Heart right ventricle (tissue), 16 donors: ENCODE measurements at regions of chr2 and their contacts with region 1.

Region 1: DNA sequence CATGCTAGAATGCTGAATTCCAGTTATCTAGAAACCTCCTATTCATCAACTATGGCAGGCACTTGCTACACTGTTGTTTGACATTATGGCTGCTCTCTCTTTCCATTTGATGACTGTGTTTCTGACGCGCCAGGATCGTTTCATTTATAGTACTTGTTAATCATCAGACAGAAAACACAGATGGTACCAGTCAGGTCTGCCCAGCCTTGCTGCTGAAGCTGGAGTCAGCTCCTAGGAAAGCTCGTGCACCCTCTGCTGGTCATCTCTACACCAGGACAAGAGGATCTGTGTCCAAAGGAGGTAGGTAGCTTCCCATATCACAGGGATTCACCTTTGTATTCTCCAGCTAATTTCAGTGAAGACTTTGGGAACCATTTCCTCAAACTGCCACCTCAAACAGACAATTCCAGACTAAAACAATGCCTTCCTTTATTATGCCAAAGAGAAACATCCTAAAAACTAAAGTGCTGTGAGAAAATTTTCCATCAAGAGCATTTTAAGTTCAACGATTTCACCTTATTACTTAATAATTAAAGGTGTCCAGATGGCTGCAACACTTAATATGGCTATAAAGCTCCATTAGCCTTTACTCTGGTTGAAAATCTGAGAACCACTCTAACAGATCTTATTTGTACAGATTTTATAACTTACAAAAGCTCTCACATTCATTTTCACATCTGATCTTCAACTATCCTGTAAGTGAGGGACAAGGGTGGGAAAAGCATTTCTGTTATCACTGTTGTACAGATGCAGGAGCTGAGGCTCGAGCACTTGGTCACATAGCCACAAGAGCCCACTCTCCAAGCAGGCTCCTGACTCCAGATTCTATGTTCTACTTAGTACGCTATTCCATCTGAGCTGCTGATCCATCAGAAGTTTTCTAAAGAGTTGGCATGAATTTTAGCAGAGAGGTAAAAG is 17.5 kb downstream of the METTL8 start:
- DNase-seq: peak; percentile 65 to 86
- ATAC-seq: peak; percentile 92 to 99 (median 96)
- H3K4me3 ChIP-seq: no peak overlapping the region
- H3K27ac ChIP-seq: peak overlapping the region in 2 of 10 donors; percentile 19 to 32
- H3K4me1 ChIP-seq: peaks cover 0 to 18% (median 0%) of the 10 kb centered on the region in 9 donors
- H3K27me3 ChIP-seq: no peaks in the 10 kb centered on the region
- CTCF ChIP-seq: peak; percentile 64 to 92 (median 87)

Region 2: GRCh38 chr2:170928824-170929685 is 487.2 kb before region 1 on chr2 and contains the start of gene GORASP2:
- intact Hi-C with region 1: loop called in 1 of 10 experiments (anchors 5 kb)
- DNase-seq: peak; percentile 97 to 99
- ATAC-seq: peak; percentile 97 to 99 (median 98)
- H3K4me3 ChIP-seq: peak within 1 kb of the TSS; percentile 73 to 98 (median 88)
- H3K27ac ChIP-seq: peak within 1 kb of the TSS; percentile 82 to 98 (median 94)
- H3K4me1 ChIP-seq: peaks cover 3 to 47% (median 38%) of the 10 kb centered on the region in 9 donors
- H3K27me3 ChIP-seq: no peaks in the 10 kb centered on the region
- CTCF ChIP-seq: peak; percentile 93 to 98 (median 97)
- total RNA-seq, gene GORASP2: 54.2 to 74.1 (median 62.1) TPM

Region 3: DNA sequence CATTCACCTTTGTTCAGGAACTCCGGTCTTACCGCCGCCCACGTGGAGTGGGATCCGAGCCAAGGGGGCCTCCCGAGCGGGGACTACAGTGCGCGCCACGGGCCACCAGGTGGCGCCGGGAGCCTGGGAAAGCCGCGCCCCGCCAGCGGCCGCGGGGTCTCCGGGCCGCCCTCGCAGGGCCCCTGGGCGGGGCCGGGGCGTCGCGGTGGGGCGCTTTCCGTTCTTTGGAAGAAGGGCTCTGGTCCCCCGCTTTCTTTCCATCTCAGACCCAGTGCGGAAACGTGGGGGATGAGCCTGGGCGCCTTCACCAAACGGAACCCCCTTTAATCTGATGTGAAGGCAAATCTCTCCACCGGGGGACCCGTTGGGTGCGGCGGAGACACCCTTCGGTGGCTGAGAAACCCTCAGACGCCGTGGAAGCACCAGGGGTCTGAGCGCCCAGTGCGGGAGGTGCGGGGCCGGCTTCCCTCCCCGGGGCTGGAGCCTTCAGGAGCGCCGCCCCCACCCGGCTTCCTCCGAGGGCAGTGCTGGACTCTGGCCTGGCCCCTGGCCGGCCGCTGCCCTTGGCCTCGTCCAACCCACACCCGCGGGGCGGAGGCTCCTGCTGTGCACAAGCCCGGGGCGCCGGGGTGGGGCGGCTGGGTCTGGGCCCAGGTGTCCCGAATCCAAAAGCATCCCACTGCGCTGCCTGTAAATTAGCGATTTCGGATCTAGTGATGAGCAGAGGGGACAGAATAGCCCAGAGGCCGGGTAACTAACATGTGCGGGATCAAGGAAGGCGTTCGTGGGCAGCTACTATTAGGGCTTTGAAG is 442.6 kb before region 1 on chr2:
- intact Hi-C with region 1: loop called (anchors 1 to 5 kb)
- DNase-seq: peak; percentile 84 to 85
- ATAC-seq: peak; percentile 95 to 98 (median 97)
- H3K4me3 ChIP-seq: peak overlapping the region; percentile 65 to 93 (median 72)
- H3K27ac ChIP-seq: peak overlapping the region; percentile 47 to 92 (median 82)
- H3K4me1 ChIP-seq: peaks cover 0 to 14% (median 10%) of the 10 kb centered on the region in 9 donors
- H3K27me3 ChIP-seq: no peaks in the 10 kb centered on the region
- CTCF ChIP-seq: peak; percentile 82 to 99 (median 94)

Region 4: DNA sequence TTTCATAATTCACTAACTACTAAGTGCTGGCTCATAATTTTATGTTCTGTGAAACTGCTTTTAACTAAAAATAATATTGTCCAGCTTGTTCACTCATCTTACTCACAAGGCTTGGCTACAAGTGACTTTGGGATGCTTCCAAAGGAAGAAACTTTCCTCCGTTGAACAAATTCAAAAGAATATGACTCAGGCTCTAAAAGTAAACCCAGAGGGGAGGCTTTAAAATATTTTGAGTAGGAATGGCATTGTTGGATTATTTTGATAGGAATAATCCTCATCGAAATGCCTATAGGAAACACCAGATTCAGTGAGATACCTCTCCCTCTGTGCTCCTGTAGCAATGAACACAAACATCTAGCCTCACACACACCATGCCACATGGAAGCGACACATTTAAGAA is 230.3 kb before region 1 on chr2:
- intact Hi-C with region 1: loop called in 1 of 10 experiments (anchors 10 kb)
- DNase-seq: peak in 1 of 2 donors; percentile 4
- ATAC-seq: no peak
- H3K4me3 ChIP-seq: no peak overlapping the region
- H3K27ac ChIP-seq: no peak overlapping the region
- H3K4me1 ChIP-seq: peaks cover 0 to 7% (median 0%) of the 10 kb centered on the region in 9 donors
- H3K27me3 ChIP-seq: peaks cover 0 to 5% (median 0%) of the 10 kb centered on the region in 7 donors
- CTCF ChIP-seq: no peak

Region 5: GRCh38 chr2:171347591-171348032 is 68.7 kb before region 1 on chr2:
- intact Hi-C with region 1: loop called in 1 of 10 experiments (anchors 5 kb)
- DNase-seq: no peak
- ATAC-seq: peak in 7 of 8 donors; percentile 34 to 87 (median 69)
- H3K4me3 ChIP-seq: no peak overlapping the region
- H3K27ac ChIP-seq: peak overlapping the region; percentile 6 to 76 (median 41)
- H3K4me1 ChIP-seq: peaks cover 0 to 23% (median 15%) of the 10 kb centered on the region in 9 donors
- H3K27me3 ChIP-seq: no peaks in the 10 kb centered on the region
- CTCF ChIP-seq: no peak